ENCODE measurements at regions of chr16 and their contacts with region 1.

Region 1: DNA sequence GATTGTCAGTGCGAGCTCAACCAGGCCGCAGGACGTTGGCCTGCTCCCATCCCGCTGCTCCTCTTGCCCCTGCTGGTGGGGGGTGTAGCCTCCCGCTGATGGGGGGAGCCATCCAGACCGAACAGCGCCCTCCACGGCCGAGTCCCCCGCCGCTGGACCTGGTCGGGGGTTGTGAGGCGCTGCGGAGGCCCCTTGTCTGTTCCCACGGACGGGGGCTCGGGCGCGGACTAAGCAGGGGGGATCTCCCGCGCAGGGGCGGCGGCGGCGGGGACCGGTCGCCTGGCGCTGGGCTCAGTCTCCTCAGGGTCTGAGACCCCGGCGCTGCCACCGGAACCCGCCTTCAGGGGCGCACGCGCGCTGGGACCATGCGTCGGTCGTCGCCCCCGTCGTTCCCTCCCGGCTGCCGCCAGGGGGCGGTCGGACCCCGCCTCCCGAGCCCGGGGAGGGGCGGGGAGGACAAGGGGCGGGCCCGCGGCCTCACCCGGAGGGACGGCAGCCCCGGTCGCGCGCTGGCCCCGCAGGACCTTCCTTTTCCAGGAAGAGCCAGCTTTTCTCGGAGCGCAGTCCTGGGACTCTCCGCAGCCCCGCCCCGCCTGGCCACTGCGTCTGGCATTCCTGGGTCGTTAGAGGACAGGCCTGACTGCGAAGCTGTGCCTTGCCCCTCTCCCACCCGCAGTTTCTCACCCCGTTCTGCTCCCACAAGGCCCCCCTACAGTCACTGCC is 6.3 kb upstream of the IL32 start:
- DNase-seq: peak; percentile 76 to 90 (median 85)
- H3K4me3 ChIP-seq: peak overlapping the region; percentile 23 to 89
- H3K4me3 Mint-ChIP-seq: peak overlapping the region; percentile 90 to 95 (median 94)
- H3K27ac ChIP-seq: peak overlapping the region; percentile 89
- H3K27ac Mint-ChIP-seq: peak overlapping the region; percentile 89 to 95 (median 92)
- H3K4me1 ChIP-seq: peaks cover 79% of the 10 kb centered on the region
- H3K4me1 Mint-ChIP-seq: peaks cover 36 to 74% (median 58%) of the 10 kb centered on the region in 4 donors
- H3K27me3 ChIP-seq: no peaks in the 10 kb centered on the region
- H3K27me3 Mint-ChIP-seq: no peaks in the 10 kb centered on the region

Region 2: GRCh38 chr16:2987839-2988238 is 71.3 kb before region 1 on chr16:
- CTCF ChIA-PET with region 1: no interaction called
- POLR2A ChIA-PET with region 1: no interaction called
- intact Hi-C with region 1: no loop called
- DNase-seq: no peak
- H3K4me3 ChIP-seq: no peak overlapping the region
- H3K4me3 Mint-ChIP-seq: no peak overlapping the region
- H3K27ac ChIP-seq: no peak overlapping the region
- H3K27ac Mint-ChIP-seq: no peak overlapping the region
- H3K4me1 ChIP-seq: peaks cover 5% of the 10 kb centered on the region
- H3K4me1 Mint-ChIP-seq: peaks cover 0 to 6% (median 2%) of the 10 kb centered on the region in 4 donors
- H3K27me3 ChIP-seq: no peaks in the 10 kb centered on the region
- H3K27me3 Mint-ChIP-seq: peaks cover 0 to 2% of the 10 kb centered on the region in 2 donors

Region 3: DNA sequence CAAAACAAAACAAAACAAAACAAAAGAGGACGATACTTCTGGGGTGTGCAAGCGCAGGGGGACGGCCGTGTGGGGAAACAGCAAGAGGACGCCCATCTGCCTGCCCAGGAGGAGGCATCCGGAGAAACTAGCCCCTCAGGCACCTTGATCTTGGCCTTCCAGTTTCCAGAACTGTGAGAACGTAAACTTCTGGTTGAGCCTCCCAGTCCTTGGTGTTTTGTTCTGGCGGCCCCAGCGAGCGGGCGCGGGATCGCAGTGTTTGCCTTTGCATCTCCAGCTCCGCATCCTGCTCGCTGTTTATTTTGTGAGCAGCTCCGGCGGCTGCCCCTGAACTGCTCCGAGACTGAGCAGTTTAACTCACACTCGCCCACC is 13.8 kb before region 1 on chr16:
- CTCF ChIA-PET with region 1: interaction called, 3 read pairs
- POLR2A ChIA-PET with region 1: interaction called, 27 read pairs
- intact Hi-C with region 1: no loop called
- DNase-seq: peak in 2 of 5 donors; percentile 48 to 49
- H3K4me3 ChIP-seq: peak overlapping the region in 1 of 2 donors; percentile 18
- H3K4me3 Mint-ChIP-seq: peak overlapping the region; percentile 72 to 90 (median 83)
- H3K27ac ChIP-seq: no peak overlapping the region
- H3K27ac Mint-ChIP-seq: peak overlapping the region in 2 of 7 donors; percentile 12 to 55
- H3K4me1 ChIP-seq: peaks cover 22% of the 10 kb centered on the region
- H3K4me1 Mint-ChIP-seq: peaks cover 10 to 27% (median 12%) of the 10 kb centered on the region in 4 donors
- H3K27me3 ChIP-seq: peaks cover 33% of the 10 kb centered on the region
- H3K27me3 Mint-ChIP-seq: peaks cover 14 to 18% of the 10 kb centered on the region in 2 donors

Region 4: GRCh38 chr16:3087243-3088235 is 28.4 kb after region 1 on chr16:
- CTCF ChIA-PET with region 1: interaction called, 249 read pairs
- POLR2A ChIA-PET with region 1: interaction called, 16 read pairs
- intact Hi-C with region 1: no loop called
- DNase-seq: no peak
- H3K4me3 ChIP-seq: no peak overlapping the region
- H3K4me3 Mint-ChIP-seq: peak overlapping the region; percentile 10 to 83 (median 64)
- H3K27ac ChIP-seq: peak overlapping the region; percentile 10
- H3K27ac Mint-ChIP-seq: peak overlapping the region in 5 of 7 donors; percentile 72 to 85 (median 77)
- H3K4me1 ChIP-seq: peaks cover 39% of the 10 kb centered on the region
- H3K4me1 Mint-ChIP-seq: peaks cover 22 to 71% (median 38%) of the 10 kb centered on the region in 4 donors
- H3K27me3 ChIP-seq: no peaks in the 10 kb centered on the region
- H3K27me3 Mint-ChIP-seq: no peaks in the 10 kb centered on the region

Region 5: GRCh38 chr16:3106205-3106928 is 47.2 kb after region 1 on chr16:
- CTCF ChIA-PET with region 1: interaction called, 249 read pairs
- POLR2A ChIA-PET with region 1: interaction called, 12 read pairs
- intact Hi-C with region 1: loop called (anchors 1 kb)
- DNase-seq: peak; percentile 87 to 90 (median 88)
- H3K4me3 ChIP-seq: peak overlapping the region; percentile 38 to 58
- H3K4me3 Mint-ChIP-seq: peak overlapping the region; percentile 78 to 92 (median 88)
- H3K27ac ChIP-seq: peak overlapping the region; percentile 82
- H3K27ac Mint-ChIP-seq: peak overlapping the region; percentile 86 to 95 (median 92)
- H3K4me1 ChIP-seq: peaks cover 37% of the 10 kb centered on the region
- H3K4me1 Mint-ChIP-seq: peaks cover 12 to 41% (median 27%) of the 10 kb centered on the region in 4 donors
- H3K27me3 ChIP-seq: no peaks in the 10 kb centered on the region
- H3K27me3 Mint-ChIP-seq: no peaks in the 10 kb centered on the region

Region 6: DNA sequence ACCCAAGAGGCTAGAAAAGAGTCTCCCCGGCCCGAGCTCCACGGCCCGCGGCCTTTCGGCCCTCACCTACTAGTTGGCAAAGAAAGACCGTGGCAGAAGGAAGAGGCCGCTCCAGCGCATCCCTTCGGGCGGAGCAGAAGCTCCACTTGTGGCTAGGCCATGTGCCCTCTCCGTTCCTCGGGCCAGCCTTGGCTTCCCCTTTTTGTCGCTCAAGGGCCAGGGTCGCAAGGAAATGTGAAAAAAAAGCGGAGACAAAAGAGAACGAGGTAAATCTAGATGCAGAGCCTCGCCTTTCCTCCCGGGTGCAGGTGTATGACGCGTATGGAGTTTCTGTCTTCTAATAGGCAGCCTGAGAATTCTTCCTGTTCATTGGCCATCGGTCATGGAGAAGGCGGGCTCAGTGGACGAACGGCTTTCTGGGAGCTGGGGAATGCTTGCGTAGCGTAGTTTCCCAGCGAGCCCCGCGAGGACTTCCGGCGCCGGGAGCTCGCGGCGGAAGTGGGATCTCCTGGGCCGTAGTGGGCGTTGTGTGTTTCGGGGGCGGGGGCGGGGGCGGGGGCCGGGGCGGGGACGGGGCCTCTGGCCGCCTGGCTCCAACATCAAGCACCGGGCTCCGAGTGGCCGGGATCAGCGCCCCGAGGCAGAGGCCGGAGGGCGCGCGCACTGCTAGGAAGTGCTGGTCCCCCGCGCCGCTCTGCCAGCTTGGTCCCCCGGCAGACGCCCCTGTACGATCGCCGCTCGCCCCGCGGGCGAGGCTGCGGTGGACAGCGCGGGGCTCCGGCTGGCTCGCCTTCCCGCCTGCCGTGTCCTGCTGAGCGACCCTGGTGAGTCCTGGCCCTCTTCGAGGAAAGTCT is 75.6 kb after region 1 on chr16 and contains the start of gene ZNF213:
- CTCF ChIA-PET with region 1: interaction called, 362 read pairs
- POLR2A ChIA-PET with region 1: interaction called, 129 read pairs
- intact Hi-C with region 1: loop called (anchors 1 kb)
- DNase-seq: peak; percentile 92 to 98 (median 96)
- H3K4me3 ChIP-seq: peak within 1 kb of the TSS; percentile 89 to 97
- H3K4me3 Mint-ChIP-seq: peak within 1 kb of the TSS; percentile 93 to 99 (median 98)
- H3K27ac ChIP-seq: peak within 1 kb of the TSS; percentile 93
- H3K27ac Mint-ChIP-seq: peak within 1 kb of the TSS; percentile 94 to 99 (median 99)
- H3K4me1 ChIP-seq: peaks cover 28% of the 10 kb centered on the region
- H3K4me1 Mint-ChIP-seq: peaks cover 12 to 44% (median 23%) of the 10 kb centered on the region in 4 donors
- H3K27me3 ChIP-seq: no peaks in the 10 kb centered on the region
- H3K27me3 Mint-ChIP-seq: no peaks in the 10 kb centered on the region
- total RNA-seq, gene ZNF213: 14.1 to 14.5 TPM

Region 7: GRCh38 chr16:3165111-3165822 is 106.1 kb after region 1 on chr16:
- CTCF ChIA-PET with region 1: interaction called, 21 read pairs
- POLR2A ChIA-PET with region 1: interaction called, 18 read pairs
- intact Hi-C with region 1: loop called (anchors 1 kb)
- DNase-seq: no peak
- H3K4me3 ChIP-seq: peak overlapping the region in 1 of 2 donors; percentile 2
- H3K4me3 Mint-ChIP-seq: peak overlapping the region; percentile 38 to 73 (median 58)
- H3K27ac ChIP-seq: peak overlapping the region; percentile 24
- H3K27ac Mint-ChIP-seq: peak overlapping the region in 5 of 7 donors; percentile 29 to 88 (median 70)
- H3K4me1 ChIP-seq: peaks cover 8% of the 10 kb centered on the region
- H3K4me1 Mint-ChIP-seq: peaks cover 4 to 21% (median 11%) of the 10 kb centered on the region in 4 donors
- H3K27me3 ChIP-seq: no peaks in the 10 kb centered on the region
- H3K27me3 Mint-ChIP-seq: no peaks in the 10 kb centered on the region

Measured in CD4-positive, alpha-beta memory T cell (primary cell).